Endothelial cell of umbilical vein (primary cell): ENCODE measurements at regions of chr1 and their contacts with region 1.

Region 1: GRCh38 chr1:116020668-116021275 is 44.5 kb downstream of the SLC22A15 start:
- DNase-seq: peak; percentile 52
- H3K4me3 ChIP-seq: no peak overlapping the region
- H3K27ac ChIP-seq: no peak overlapping the region
- H3K4me1 ChIP-seq: no peaks in the 10 kb centered on the region
- H3K27me3 ChIP-seq: no peaks in the 10 kb centered on the region
- CTCF ChIP-seq: peak; percentile 61 to 66
- POLR2A ChIP-seq: no peak

Region 2: DNA sequence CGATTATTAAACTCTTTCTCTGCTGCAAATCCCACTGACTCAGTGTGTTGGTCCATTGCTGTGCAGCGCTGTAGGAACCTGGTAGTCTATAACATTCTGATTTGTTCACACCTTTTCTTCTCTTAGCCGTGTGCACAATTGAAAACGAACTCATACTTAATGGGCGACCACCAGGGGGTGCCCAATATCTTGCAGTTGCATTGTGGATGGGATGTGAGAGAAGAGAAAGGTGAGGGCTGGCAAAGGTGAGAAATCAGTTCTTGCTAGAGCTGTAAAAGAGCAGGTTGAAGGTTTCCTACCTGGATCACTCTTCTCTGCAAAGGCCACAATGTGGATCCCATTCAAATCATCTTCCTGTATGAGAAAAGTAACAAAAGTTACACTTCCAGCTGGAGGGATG is 303.2 kb before region 1 on chr1:
- CTCF ChIA-PET with region 1: interaction called, 11 read pairs
- POLR2A ChIA-PET with region 1: no interaction called
- dilution Hi-C with region 1: no loop called
- intact Hi-C with region 1: loop called (anchors 1 kb)
- DNase-seq: peak; percentile 30
- H3K4me3 ChIP-seq: no peak overlapping the region
- H3K27ac ChIP-seq: no peak overlapping the region
- H3K4me1 ChIP-seq: no peaks in the 10 kb centered on the region
- H3K27me3 ChIP-seq: peaks cover 2 to 16% of the 10 kb centered on the region in 2 experiments
- CTCF ChIP-seq: peak; percentile 41 to 56
- POLR2A ChIP-seq: no peak

Region 3: DNA sequence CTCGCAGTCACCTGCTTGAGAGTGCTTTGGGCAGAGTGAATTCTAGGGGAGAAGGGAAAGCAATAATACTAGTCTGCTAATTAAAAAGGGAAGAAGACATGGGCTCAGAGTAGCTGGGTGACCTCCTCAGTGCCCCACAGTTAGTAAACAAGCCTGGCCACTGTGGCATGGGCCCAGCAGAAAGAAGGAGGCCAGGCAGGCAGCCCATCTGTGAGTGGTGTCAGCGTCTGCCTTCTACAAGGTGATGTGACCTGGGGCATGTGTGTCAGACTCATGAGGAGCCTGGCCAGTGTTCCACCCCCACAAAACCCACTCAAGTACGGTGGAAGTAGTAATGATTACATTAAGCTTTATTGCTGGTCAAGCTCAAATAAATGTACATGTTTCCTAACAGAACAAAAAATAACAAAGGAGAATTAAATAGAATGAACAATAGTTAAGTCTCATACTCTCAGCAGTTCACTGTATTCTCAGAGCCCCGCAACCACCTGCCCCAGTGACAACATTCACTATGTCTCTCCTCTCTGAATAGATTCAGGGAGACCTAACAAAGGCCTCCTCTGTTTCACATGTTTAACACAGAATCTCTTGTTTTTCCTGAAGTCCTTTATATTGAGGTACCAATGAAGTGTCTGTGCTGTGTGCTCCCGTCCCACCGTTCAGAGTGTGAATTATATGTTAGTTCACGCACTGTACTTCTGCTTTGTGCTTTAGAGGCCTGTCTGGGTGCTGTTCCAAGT is 12.0 kb before region 1 on chr1:
- CTCF ChIA-PET with region 1: interaction called, 15 read pairs
- POLR2A ChIA-PET with region 1: no interaction called
- dilution Hi-C with region 1: no loop called
- intact Hi-C with region 1: no loop called
- DNase-seq: no peak
- H3K4me3 ChIP-seq: no peak overlapping the region
- H3K27ac ChIP-seq: no peak overlapping the region
- H3K4me1 ChIP-seq: no peaks in the 10 kb centered on the region
- H3K27me3 ChIP-seq: no peaks in the 10 kb centered on the region
- CTCF ChIP-seq: no peak
- POLR2A ChIP-seq: no peak

Region 4: DNA sequence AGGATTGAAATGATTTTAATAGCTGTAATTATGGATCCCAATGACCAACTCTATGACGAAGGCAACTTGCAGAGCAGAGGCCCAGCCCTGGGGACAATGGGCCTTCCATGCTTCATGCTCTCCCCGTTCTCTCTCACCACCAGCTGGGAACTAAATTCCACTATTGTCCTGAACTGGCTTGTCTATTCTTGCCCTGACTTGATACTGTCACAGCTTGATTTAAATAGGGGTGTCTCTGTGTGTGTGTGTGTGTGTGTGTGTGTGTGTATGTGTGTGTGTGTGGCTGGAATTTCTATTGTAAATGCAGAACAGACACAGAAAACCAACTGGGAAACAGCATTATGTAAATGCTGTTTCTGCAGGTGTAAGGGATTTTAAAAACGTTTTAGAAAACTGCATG is 12.6 kb after region 1 on chr1:
- CTCF ChIA-PET with region 1: interaction called, 25 read pairs
- POLR2A ChIA-PET with region 1: no interaction called
- dilution Hi-C with region 1: no loop called
- intact Hi-C with region 1: no loop called
- DNase-seq: no peak
- H3K4me3 ChIP-seq: no peak overlapping the region
- H3K27ac ChIP-seq: no peak overlapping the region
- H3K4me1 ChIP-seq: no peaks in the 10 kb centered on the region
- H3K27me3 ChIP-seq: no peaks in the 10 kb centered on the region
- CTCF ChIP-seq: no peak
- POLR2A ChIP-seq: no peak